IMR-90 (cell line): ENCODE measurements at regions of chr4 and their contacts with region 1.

Region 1: DNA sequence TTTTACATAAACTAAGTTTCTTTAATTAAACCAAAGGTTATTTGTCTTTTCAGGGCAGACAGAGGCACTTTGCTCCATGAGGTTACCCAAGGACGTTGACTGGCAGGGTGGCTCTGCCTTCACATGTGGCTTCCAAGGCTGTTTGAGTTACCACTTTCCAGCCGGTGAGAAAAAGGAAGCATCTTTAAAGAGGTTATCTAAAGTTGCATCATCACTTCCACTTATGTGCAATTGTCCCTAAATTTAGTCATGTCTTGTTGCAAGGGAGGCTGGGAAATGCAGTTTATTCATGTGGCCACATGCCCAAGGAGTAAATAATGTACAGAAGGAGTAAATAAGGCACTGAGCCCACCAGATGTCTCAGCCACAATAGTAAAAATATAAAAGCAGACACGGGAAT is 29.0 kb upstream of the RAP1GDS1 start:
- DNase-seq: peak; percentile 30
- ATAC-seq: no peak
- H3K4me3 ChIP-seq: no peak overlapping the region
- H3K27ac ChIP-seq: no peak overlapping the region
- H3K4me1 ChIP-seq: no peaks in the 10 kb centered on the region
- H3K27me3 ChIP-seq: no peaks in the 10 kb centered on the region
- CTCF ChIP-seq: no peak
- POLR2A ChIP-seq: no peak
- RAD21 ChIP-seq: no peak

Region 2: DNA sequence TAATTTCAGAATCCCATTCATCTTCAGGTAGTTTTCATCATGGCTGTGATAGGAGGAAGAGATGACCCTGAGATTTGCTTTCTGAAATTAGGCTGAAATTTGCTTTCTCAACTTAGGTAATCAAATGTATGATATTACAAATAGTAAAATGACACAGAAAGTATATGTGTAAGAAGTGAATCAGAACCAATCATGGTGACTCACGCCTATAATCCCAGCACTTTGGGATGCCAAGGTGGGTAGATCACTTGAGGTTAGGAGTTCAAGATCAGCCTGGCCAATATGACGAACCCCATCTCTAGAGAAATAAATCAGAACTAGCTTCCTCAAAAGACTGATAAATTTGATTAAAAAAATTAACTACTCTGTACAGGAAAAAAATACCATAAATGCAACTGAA is 644.3 kb before region 1 on chr4:
- CTCF ChIA-PET with region 1: no interaction called
- POLR2A ChIA-PET with region 1: no interaction called
- dilution Hi-C with region 1: no loop called
- in situ Hi-C with region 1: no loop called
- intact Hi-C with region 1: no loop called
- DNase-seq: no peak
- ATAC-seq: no peak
- H3K4me3 ChIP-seq: no peak overlapping the region
- H3K27ac ChIP-seq: no peak overlapping the region
- H3K4me1 ChIP-seq: no peaks in the 10 kb centered on the region
- H3K27me3 ChIP-seq: no peaks in the 10 kb centered on the region
- CTCF ChIP-seq: no peak
- POLR2A ChIP-seq: no peak
- RAD21 ChIP-seq: no peak

Region 3: GRCh38 chr4:98185279-98185678 is 46.9 kb before region 1 on chr4:
- CTCF ChIA-PET with region 1: no interaction called
- POLR2A ChIA-PET with region 1: no interaction called
- dilution Hi-C with region 1: no loop called
- in situ Hi-C with region 1: no loop called
- intact Hi-C with region 1: loop called (anchors 5 kb)
- DNase-seq: no peak
- ATAC-seq: no peak
- H3K4me3 ChIP-seq: no peak overlapping the region
- H3K27ac ChIP-seq: no peak overlapping the region
- H3K4me1 ChIP-seq: no peaks in the 10 kb centered on the region
- H3K27me3 ChIP-seq: no peaks in the 10 kb centered on the region
- CTCF ChIP-seq: no peak
- POLR2A ChIP-seq: no peak
- RAD21 ChIP-seq: no peak

Region 4: GRCh38 chr4:98778206-98778605 is 546.0 kb after region 1 on chr4:
- CTCF ChIA-PET with region 1: no interaction called
- POLR2A ChIA-PET with region 1: no interaction called
- dilution Hi-C with region 1: no loop called
- in situ Hi-C with region 1: no loop called
- intact Hi-C with region 1: no loop called
- DNase-seq: peak; percentile 91
- ATAC-seq: peak; percentile 71
- H3K4me3 ChIP-seq: no peak overlapping the region
- H3K27ac ChIP-seq: no peak overlapping the region
- H3K4me1 ChIP-seq: peaks cover 17% of the 10 kb centered on the region
- H3K27me3 ChIP-seq: peaks cover 12% of the 10 kb centered on the region
- CTCF ChIP-seq: no peak
- POLR2A ChIP-seq: no peak
- RAD21 ChIP-seq: no peak